ENCODE measurements at regions of chr12 and their contacts with region 1.

Region 1: DNA sequence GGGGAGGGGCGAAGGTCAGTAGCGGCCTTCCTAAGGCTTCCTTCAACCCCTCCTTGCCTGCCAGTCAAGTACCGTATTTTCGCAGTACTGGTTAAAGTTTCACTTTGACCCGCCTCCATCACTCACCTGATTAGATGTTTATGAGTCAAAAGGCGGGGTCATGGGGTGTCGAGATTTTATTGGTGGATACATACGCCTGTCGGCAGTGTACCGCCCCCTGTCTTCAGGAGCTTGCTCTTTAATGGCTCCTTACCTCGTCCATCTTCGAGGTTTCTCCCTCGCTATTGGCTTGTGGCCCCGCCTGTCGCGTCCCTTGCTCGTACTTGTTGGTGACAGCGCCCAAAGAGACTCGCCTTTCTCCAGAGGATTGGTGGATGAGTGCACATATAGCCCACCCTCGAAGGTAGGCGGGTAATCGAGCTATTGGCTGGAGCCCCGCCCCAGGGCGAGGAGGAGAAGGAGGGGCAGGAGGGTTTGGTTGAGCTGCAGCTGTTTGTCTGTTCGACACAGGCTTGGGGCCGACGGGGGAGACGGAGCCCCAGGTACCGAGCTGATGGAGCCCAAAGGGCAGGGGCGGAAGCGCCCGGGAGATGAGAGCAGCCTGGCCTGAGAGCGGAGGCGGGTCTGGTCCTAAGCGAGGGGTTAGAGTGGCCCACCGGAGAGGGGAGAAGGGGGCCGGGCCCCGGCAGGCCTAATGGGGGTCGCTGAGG is at the start of gene RAB5B:
- DNase-seq: peak; percentile 99
- H3K4me3 Mint-ChIP-seq: no peak within 1 kb of the TSS
- H3K27ac Mint-ChIP-seq: no peak within 1 kb of the TSS
- H3K4me1 Mint-ChIP-seq: peaks cover 24% of the 10 kb centered on the region
- H3K27me3 Mint-ChIP-seq: no peaks in the 10 kb centered on the region
- total RNA-seq, gene RAB5B: 33.2 to 35.7 TPM

Region 2: DNA sequence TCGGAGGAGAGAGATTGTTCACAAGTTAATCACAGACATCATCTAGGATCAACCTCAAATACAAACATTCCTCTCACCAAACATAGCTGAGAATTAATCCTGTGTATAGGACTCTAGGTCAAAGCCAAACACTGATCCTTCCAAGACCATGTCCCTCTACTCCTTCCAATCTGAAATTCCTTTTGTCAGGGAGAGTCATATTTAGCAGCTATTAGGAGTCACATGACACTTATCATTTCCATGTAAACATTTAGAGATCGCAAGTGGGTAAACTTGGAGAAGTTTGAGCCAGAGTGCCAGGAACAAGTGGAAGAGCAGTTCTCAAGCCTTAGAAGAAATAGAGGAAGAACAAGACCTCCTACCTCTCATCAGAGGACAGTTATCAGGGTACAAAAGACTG is 387.9 kb before region 1 on chr12:
- CTCF ChIA-PET with region 1: no interaction called
- intact Hi-C with region 1: no loop called
- DNase-seq: no peak
- H3K4me3 Mint-ChIP-seq: no peak overlapping the region
- H3K27ac Mint-ChIP-seq: no peak overlapping the region
- H3K4me1 Mint-ChIP-seq: no peaks in the 10 kb centered on the region
- H3K27me3 Mint-ChIP-seq: peaks cover 22% of the 10 kb centered on the region

Region 3: DNA sequence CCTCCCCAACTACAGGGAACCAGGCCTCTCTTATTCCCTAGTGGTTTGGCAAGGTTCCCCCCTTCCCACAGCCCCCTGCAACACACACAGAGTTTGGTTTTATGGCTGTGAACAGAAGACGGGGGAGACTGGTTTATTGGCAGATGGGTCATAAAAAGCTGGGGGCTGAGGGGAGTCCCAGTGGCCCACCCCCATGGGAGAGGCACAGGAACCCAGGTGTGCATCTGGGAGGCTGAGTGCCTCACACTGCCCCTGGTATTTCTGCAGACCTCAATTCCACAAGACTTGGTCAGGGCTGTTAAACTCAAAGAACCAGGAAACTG is 229.1 kb before region 1 on chr12:
- CTCF ChIA-PET with region 1: no interaction called
- intact Hi-C with region 1: no loop called
- DNase-seq: no peak
- H3K4me3 Mint-ChIP-seq: peak overlapping the region; percentile 84
- H3K27ac Mint-ChIP-seq: no peak overlapping the region
- H3K4me1 Mint-ChIP-seq: peaks cover 26% of the 10 kb centered on the region
- H3K27me3 Mint-ChIP-seq: no peaks in the 10 kb centered on the region

Region 4: GRCh38 chr12:55817346-55818139 is 156.2 kb before region 1 on chr12 and contains the starts of genes ORMDL2 and SARNP:
- CTCF ChIA-PET with region 1: no interaction called
- intact Hi-C with region 1: loop called (anchors 1 kb)
- DNase-seq: peak; percentile 99
- H3K4me3 Mint-ChIP-seq: no peak within 1 kb of the TSS
- H3K27ac Mint-ChIP-seq: no peak within 1 kb of the TSS
- H3K4me1 Mint-ChIP-seq: peaks cover 43% of the 10 kb centered on the region
- H3K27me3 Mint-ChIP-seq: no peaks in the 10 kb centered on the region
- total RNA-seq, gene ORMDL2: 23.8 to 26.4 TPM
- total RNA-seq, gene SARNP: 100 to 101 TPM

Region 5: DNA sequence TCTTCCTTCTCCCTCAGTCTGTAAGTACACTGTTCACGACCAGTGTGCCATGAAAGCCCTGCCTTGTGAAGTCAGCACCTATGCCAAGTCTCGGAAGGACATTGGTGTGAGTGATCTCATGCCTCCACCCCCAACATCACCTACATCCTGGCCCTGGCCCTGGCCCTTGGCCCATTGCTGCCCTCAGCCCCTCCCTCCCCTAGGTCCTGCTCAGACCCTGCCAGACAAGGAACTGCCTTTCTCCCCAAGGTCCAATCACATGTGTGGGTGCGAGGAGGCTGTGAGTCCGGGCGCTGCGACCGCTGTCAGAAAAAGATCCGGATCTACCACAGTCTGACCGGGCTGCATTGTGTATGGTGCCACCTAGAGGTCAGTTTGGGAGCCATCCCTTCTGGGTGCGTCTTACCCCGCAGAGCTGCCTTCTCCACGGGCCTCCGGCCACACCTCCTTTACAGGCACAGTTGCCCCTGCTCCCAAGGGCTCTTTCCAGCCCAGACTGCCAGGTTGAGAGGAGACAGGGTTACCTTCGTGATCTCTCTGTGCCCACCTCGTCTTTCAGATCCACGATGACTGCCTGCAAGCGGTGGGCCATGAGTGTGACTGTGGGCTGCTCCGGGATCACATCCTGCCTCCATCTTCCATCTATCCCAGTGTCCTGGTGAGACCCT is 33.6 kb before region 1 on chr12:
- CTCF ChIA-PET with region 1: interaction called, 11 read pairs
- intact Hi-C with region 1: no loop called
- DNase-seq: peak; percentile 94
- H3K4me3 Mint-ChIP-seq: no peak overlapping the region
- H3K27ac Mint-ChIP-seq: peak overlapping the region; percentile 74
- H3K4me1 Mint-ChIP-seq: peaks cover 72% of the 10 kb centered on the region
- H3K27me3 Mint-ChIP-seq: no peaks in the 10 kb centered on the region

Region 6: DNA sequence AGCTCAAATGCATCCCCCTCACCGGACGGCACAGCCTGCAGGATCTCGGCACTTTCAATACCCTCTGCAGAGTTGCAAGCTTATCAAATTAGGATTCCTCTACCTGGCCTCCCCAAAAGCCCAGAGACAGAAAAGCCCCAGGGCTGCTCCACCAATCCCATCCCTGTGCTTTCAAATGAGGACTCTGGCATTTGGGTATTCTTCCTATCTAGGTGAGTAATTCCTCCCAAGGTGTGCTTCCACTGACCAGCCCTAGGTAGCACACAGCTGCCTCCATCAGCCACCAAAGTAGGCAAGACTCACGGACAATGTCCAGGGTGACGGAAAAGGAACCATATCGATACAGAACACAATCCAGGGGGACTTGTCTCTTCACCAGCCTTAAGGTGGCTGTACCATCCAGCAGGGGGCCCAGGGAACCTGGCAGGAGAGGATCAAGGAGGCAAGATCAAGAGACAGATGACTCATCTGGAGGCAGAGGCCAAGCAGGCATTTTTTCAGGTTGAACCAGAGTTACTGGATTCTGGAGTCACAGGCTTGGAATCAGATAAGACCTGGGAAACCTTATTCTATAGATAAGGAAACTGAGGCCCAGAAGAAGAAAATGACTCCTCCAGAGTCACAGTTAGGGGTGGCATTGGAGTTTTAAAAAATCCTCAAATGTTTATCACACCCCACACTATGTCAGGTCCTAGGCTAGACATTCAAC is 17.8 kb before region 1 on chr12:
- CTCF ChIA-PET with region 1: interaction called, 3 read pairs
- intact Hi-C with region 1: loop called (anchors 1 kb)
- DNase-seq: peak; percentile 65
- H3K4me3 Mint-ChIP-seq: no peak overlapping the region
- H3K27ac Mint-ChIP-seq: peak overlapping the region; percentile 63
- H3K4me1 Mint-ChIP-seq: peaks cover 15% of the 10 kb centered on the region
- H3K27me3 Mint-ChIP-seq: no peaks in the 10 kb centered on the region

Region 7: GRCh38 chr12:56007564-56008559 is 34.1 kb after region 1 on chr12:
- CTCF ChIA-PET with region 1: no interaction called
- intact Hi-C with region 1: loop called (anchors 1 kb)
- DNase-seq: peak; percentile 64
- H3K4me3 Mint-ChIP-seq: peak overlapping the region; percentile 90
- H3K27ac Mint-ChIP-seq: peak overlapping the region; percentile 76
- H3K4me1 Mint-ChIP-seq: peaks cover 22% of the 10 kb centered on the region
- H3K27me3 Mint-ChIP-seq: no peaks in the 10 kb centered on the region

Region 8: GRCh38 chr12:56071648-56072047 is 97.9 kb after region 1 on chr12:
- CTCF ChIA-PET with region 1: no interaction called
- intact Hi-C with region 1: no loop called
- DNase-seq: no peak
- H3K4me3 Mint-ChIP-seq: no peak overlapping the region
- H3K27ac Mint-ChIP-seq: no peak overlapping the region
- H3K4me1 Mint-ChIP-seq: peaks cover 4% of the 10 kb centered on the region
- H3K27me3 Mint-ChIP-seq: no peaks in the 10 kb centered on the region

Region 9: GRCh38 chr12:56104109-56104814 is 130.5 kb after region 1 on chr12 and contains the start of gene PA2G4:
- CTCF ChIA-PET with region 1: interaction called, 3 read pairs
- intact Hi-C with region 1: loop called (anchors 1 kb)
- DNase-seq: peak; percentile 99
- H3K4me3 Mint-ChIP-seq: peak within 1 kb of the TSS; percentile 99
- H3K27ac Mint-ChIP-seq: peak within 1 kb of the TSS; percentile 99
- H3K4me1 Mint-ChIP-seq: peaks cover 38% of the 10 kb centered on the region
- H3K27me3 Mint-ChIP-seq: no peaks in the 10 kb centered on the region
- total RNA-seq, gene PA2G4: 398 to 411 TPM

Region 10: DNA sequence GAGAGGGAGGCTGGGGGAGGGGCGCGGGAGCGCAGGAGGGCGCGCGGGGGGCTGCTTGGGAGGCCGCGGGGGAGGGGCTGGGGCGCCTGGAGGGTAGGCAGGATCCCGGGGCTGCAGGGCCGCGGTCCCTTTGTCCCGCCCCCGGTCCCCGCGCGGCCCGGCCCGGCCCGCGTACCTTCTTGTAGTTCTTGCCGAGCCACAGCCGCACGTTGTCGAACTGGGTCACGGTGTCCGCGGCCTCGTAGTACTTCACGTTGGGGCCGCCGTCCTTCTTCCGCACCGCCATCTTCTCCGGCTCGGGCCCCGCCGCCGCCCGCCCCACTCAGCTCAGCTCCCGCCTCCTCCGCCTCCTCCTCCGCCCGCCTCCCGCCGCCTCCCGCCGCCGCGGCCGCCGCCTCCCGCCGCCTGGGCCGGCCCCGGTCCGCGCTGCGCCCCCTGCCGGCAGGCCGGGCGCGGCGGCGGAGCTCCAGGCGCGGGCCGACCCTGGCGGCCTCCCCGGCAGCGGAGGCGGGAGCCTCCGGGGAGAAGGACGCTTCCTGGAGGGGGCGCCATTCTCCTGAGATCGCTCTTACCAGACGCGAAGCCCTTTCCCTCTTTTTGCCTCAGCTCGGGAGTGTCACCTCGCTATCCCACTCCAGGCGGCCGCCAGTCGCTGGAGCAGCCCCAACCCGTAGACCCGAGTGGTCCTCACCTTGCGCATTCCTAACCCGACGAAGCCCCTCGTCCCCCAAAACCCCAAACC is 215.6 kb after region 1 on chr12 and contains the start of gene SMARCC2:
- CTCF ChIA-PET with region 1: no interaction called
- intact Hi-C with region 1: loop called (anchors 2 kb)
- DNase-seq: peak; percentile 93
- H3K4me3 Mint-ChIP-seq: peak within 1 kb of the TSS; percentile 95
- H3K27ac Mint-ChIP-seq: peak within 1 kb of the TSS; percentile 92
- H3K4me1 Mint-ChIP-seq: peaks cover 33% of the 10 kb centered on the region
- H3K27me3 Mint-ChIP-seq: no peaks in the 10 kb centered on the region
- total RNA-seq, gene SMARCC2: 75.8 to 79.0 TPM

Measured in activated naive CD4-positive, alpha-beta T cell treated with anti-CD3 and anti-CD28 coated beads for 36 hours (primary cell).